ENCODE measurements at regions of chr1 and their contacts with region 1.

Region 1: DNA sequence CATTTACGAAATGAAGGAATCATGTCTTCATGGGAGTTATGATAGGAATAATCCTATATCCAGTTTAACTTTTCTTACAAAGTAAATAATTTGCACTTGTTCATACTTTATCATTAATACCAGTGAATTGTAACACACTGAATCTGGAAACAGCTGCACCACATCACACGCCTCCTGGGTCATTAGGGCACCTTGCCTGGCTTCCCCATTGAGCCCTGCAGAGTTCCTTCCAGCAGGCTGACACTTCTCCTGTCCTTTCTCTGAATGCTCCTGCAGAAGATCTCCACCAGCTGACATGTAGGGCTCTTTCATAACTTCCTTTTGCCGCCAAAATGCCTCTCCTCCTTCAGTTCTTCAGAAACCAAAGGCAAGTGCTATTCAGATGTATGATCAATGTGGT is 201.1 kb downstream of the DAB1 start:
- DNase-seq: no peak
- ATAC-seq: no peak
- H3K4me3 ChIP-seq: no peak overlapping the region
- H3K27ac ChIP-seq: no peak overlapping the region
- H3K4me1 ChIP-seq: no peaks in the 10 kb centered on the region
- H3K27me3 ChIP-seq: no peaks in the 10 kb centered on the region
- CTCF ChIP-seq: no peak
- POLR2A ChIP-seq: no peak

Region 2: DNA sequence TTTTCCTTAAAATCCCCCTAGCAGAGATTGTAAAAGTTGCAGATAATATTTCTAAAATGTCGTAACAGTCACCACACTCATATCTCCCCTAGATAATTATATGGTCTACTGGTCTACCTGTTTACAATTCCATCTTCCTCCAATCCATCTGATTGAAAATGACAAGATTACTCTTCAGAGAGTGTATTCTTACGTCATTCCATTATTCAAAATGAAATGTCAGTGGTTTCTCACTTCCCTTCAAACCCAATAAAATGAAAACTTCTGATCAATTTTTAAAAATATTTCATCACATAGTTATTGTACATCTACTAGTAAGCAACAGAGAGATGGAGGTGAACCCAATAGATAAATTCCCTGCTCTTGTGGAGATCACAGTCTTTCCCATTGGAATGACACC is 54.8 kb before region 1 on chr1:
- intact Hi-C with region 1: no loop called
- DNase-seq: no peak
- ATAC-seq: no peak
- H3K4me3 ChIP-seq: no peak overlapping the region
- H3K27ac ChIP-seq: no peak overlapping the region
- H3K4me1 ChIP-seq: peaks cover 0 to 11% (median 0%) of the 10 kb centered on the region in 12 donors
- H3K27me3 ChIP-seq: no peaks in the 10 kb centered on the region
- CTCF ChIP-seq: no peak
- POLR2A ChIP-seq: no peak

Region 3: GRCh38 chr1:57254022-57254421 is 31.2 kb after region 1 on chr1:
- intact Hi-C with region 1: loop called in 1 of 10 experiments (anchors 1 kb)
- DNase-seq: no peak
- ATAC-seq: no peak
- H3K4me3 ChIP-seq: no peak overlapping the region
- H3K27ac ChIP-seq: no peak overlapping the region
- H3K4me1 ChIP-seq: peaks cover 0 to 6% (median 0%) of the 10 kb centered on the region in 12 donors
- H3K27me3 ChIP-seq: no peaks in the 10 kb centered on the region
- CTCF ChIP-seq: no peak
- POLR2A ChIP-seq: no peak